Activated CD4-positive, alpha-beta T cell treated with anti-CD3 and anti-CD28 coated beads, Interleukin-2, amount 10 ng/mL, durations not matched to agents 24 days and 14 days (primary cell): ENCODE measurements at regions of chr1 and their contacts with region 1.

Region 1: DNA sequence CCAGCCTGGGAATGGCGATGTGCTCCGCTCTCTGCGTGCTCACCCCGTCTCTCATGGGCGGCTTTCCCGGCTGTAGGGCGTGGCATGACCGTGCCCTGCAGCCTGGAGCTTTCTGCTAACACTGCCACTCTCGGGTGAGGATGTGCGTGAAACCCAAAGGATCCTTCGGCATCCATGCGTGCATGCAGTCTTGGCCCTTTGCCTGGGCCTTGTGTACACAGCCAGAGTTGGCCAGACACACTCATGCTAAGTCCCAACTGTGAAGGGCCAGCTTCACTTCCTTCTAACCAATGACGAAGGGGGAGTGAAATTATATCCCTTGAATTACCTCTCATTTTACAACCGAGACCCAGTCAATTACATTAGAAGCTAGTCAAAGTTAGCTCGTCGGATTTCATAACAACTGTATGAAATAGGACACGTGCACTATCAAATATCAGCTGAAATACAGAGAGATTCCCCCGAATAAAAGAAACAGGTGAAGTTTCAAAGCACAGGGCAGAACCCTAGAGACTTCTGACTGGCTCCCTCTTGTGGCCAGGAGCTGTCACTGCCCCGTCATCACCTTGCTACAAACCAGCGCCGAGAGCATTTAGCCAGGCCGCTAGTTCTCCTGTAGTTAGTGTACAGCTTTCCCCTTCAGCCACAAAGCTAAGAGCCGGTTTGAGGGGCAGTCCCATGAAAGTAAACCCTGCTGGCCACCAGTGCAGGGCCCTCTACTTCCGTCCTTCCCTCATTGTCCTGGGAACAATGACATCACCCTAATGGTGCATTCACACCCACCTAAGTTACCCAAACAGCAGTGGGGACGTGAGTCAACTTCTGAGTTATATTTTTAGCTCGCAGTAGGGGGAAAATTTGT is 63.4 kb upstream of the COA6 start:
- DNase-seq: peak; percentile 91
- H3K4me3 Mint-ChIP-seq: peak overlapping the region; percentile 50
- H3K27ac Mint-ChIP-seq: peak overlapping the region; percentile 70
- H3K4me1 Mint-ChIP-seq: peaks cover 20% of the 10 kb centered on the region
- H3K27me3 Mint-ChIP-seq: peaks cover 5% of the 10 kb centered on the region

Region 2: DNA sequence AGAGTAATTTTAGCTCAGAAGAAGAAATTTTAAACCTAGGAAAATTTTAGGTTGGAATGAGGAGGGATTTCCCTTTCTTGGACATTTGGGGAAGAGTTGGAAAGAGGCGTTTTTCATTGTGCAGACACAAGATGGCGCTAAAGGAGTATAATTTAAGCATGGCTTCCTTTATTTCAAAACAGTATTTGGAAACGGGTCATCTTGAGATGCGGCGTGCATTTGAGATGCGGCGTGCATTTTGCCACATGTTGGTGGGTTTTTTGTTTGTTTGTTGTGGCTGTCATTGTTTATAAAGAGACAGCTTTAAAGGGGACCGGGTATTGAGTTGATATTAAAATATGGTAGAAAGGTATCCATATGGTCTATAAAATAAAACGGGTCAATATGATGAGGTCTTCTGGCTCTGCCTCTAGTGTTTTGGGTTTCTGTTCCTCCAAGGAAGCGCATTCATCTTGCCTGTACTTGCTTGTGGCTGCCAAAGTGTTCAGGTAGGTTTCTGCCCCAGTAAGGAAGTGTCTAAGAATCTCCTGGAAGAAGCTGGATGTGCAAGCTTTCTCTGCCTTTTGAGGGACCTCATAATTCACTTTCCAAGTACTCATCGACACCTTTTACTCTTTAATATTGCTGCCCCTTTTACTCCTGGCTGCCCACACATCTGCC is 195.1 kb before region 1 on chr1:
- intact Hi-C with region 1: loop called (anchors 2 kb)
- DNase-seq: peak; percentile 76
- H3K4me3 Mint-ChIP-seq: peak overlapping the region; percentile 57
- H3K27ac Mint-ChIP-seq: no peak overlapping the region
- H3K4me1 Mint-ChIP-seq: peaks cover 7% of the 10 kb centered on the region
- H3K27me3 Mint-ChIP-seq: peaks cover 32% of the 10 kb centered on the region

Region 3: GRCh38 chr1:234154320-234155251 is 155.2 kb before region 1 on chr1:
- intact Hi-C with region 1: loop called (anchors 1 kb)
- DNase-seq: peak; percentile 77
- H3K4me3 Mint-ChIP-seq: no peak overlapping the region
- H3K27ac Mint-ChIP-seq: no peak overlapping the region
- H3K4me1 Mint-ChIP-seq: no peaks in the 10 kb centered on the region
- H3K27me3 Mint-ChIP-seq: peaks cover 21% of the 10 kb centered on the region

Region 4: DNA sequence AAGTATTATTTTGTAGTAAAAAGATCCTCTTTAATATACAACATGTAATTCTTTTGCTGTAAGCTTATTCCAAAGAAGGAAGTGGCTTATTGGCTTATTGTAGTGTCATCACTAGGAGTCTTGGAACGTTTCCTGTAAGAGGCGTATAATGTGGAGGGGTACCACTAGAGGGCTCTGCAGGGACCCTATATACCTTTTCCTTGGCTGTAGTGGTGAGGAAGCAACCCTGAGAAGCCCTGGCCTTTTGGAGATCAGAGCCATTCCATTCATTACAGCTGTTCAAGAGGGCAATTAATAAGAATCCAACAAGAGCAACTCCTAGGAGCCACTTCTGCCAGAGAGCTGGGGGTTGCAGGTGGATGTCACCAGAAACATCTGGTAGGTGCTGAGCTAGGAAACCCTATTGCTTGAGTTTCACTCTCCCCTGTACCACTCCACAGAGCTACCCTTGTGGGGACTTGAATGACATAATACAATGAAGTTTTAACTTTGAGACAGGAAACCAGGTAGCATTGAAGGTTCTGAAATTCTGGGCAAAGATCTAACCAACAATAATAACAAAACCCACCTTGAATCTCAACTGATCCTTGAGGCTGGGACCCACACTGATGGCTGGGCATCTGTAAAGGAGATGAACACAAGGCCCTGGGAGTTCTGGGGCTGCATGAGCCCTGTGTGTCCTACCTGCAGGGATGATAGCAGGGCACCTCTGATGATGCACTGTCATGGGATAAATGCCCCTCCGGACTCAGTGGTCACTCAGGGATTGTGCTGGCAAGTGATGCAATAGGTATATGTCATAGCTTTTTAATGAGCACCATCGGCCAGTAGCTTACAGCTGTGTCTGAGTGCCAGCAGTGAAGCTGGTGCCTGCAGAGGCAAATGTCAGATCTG is 96.8 kb before region 1 on chr1:
- intact Hi-C with region 1: loop called (anchors 1 kb)
- DNase-seq: peak; percentile 75
- H3K4me3 Mint-ChIP-seq: peak overlapping the region; percentile 86
- H3K27ac Mint-ChIP-seq: no peak overlapping the region
- H3K4me1 Mint-ChIP-seq: peaks cover 34% of the 10 kb centered on the region
- H3K27me3 Mint-ChIP-seq: peaks cover 22% of the 10 kb centered on the region

Region 5: DNA sequence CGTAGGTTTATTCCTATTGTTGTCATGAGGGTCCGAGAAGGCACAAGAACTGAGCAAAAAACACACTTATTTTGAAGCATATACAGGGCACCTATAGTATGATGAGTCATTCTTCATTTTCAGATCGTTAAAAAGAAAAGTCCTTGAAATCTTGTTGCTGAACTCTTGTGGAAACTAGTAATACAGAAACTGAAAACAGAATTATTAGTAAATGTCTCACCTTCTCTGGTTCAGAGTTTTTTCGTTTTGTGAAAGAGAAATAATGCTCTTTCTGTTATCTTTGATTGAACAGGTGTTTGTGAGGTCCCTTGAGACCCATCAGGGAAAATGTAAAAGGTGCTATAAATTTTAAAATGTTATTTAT is 38.6 kb before region 1 on chr1:
- intact Hi-C with region 1: loop called (anchors 2 kb)
- DNase-seq: no peak
- H3K4me3 Mint-ChIP-seq: peak overlapping the region; percentile 2
- H3K27ac Mint-ChIP-seq: peak overlapping the region; percentile 49
- H3K4me1 Mint-ChIP-seq: peaks cover 27% of the 10 kb centered on the region
- H3K27me3 Mint-ChIP-seq: peaks cover 4% of the 10 kb centered on the region